B cell (primary cell): ENCODE measurements at regions of chr4 and their contacts with region 1.

Region 1: DNA sequence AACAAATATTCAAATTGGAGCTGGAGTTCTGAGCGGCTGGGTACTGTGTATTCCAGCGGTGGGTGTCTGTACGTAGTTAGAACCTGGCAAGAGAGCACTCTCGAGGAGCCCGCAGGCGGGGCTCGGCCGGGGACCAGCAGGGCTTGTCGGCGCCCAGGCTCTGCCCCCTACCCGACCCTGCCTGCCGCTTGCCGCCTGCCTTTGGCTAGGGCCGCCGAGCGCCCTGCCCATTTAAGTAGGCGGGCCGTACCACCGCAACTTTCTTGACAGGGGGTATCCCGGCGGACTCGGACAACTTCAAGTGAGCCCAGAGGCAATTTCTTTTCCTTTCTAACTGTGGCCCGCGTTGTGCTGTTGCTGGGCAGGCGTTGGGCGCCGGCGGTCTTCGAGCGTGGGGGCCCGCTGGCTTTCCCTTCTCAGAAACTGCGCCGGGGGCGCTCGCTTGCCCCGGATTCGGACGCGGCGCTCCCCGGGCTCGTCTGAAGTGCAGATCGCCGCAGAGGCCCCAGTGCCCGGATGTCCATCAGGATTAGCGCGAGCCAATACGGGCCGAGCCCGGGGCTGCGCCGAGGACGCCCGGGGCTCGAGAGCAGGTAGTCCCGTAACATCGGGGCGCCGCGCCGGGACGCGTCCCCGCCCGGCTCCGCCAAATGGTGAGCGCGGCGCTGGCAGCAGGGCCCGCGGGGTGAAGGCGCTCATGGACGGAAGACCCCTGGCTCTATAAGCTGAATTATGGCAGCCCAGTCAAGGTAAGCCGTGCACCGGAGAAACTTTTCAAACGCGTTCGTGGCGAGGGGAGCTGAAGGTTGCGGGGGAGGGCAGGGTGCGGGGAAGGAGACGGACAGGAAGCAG is 72.1 kb downstream of the AFF1 start:
- DNase-seq: peak; percentile 97
- ATAC-seq: peak; percentile 85
- H3K4me3 ChIP-seq: peak overlapping the region; percentile 67 to 100 (median 89)
- H3K4me3 Mint-ChIP-seq: peak overlapping the region; percentile 99
- H3K27ac ChIP-seq: peak overlapping the region; percentile 88 to 92
- H3K27ac Mint-ChIP-seq: peak overlapping the region; percentile 95
- H3K4me1 ChIP-seq: peaks cover 40 to 46% of the 10 kb centered on the region in 2 donors
- H3K4me1 Mint-ChIP-seq: peaks cover 54% of the 10 kb centered on the region
- H3K27me3 ChIP-seq: no peaks in the 10 kb centered on the region
- H3K27me3 Mint-ChIP-seq: no peaks in the 10 kb centered on the region
- CTCF ChIP-seq: peak; percentile 8

Region 2: GRCh38 chr4:85498068-85498733 is 1508.7 kb before region 1 on chr4:
- CTCF ChIA-PET with region 1: no interaction called
- POLR2A ChIA-PET with region 1: interaction called, 11 read pairs
- intact Hi-C with region 1: no loop called
- DNase-seq: peak; percentile 82
- ATAC-seq: peak; percentile 97
- H3K4me3 ChIP-seq: peak overlapping the region in 1 of 5 experiments; percentile 34
- H3K4me3 Mint-ChIP-seq: peak overlapping the region; percentile 66
- H3K27ac ChIP-seq: peak overlapping the region; percentile 67 to 91
- H3K27ac Mint-ChIP-seq: peak overlapping the region; percentile 89
- H3K4me1 ChIP-seq: peaks cover 36 to 45% of the 10 kb centered on the region in 2 donors
- H3K4me1 Mint-ChIP-seq: peaks cover 63% of the 10 kb centered on the region
- H3K27me3 ChIP-seq: no peaks in the 10 kb centered on the region
- H3K27me3 Mint-ChIP-seq: no peaks in the 10 kb centered on the region
- CTCF ChIP-seq: no peak

Region 3: DNA sequence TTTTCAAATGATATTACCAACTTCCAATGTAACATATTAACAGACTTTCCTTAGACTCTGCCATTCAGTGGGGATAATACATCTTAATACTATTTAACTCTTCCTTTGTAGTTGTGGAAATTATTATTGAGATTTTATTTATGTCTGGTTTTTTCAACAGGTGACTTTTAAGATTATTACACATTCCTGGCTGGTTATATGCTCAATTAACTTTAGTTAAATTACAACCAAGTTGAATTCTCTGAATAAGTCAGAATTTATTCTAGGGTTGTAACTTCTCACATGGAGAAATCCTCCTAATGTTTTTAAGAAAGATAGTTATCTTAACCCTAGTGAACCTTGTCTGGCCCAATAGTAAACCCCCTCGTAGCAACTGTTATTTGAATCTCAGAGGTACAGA is 265.1 kb before region 1 on chr4:
- CTCF ChIA-PET with region 1: no interaction called
- POLR2A ChIA-PET with region 1: no interaction called
- intact Hi-C with region 1: no loop called
- DNase-seq: no peak
- ATAC-seq: no peak
- H3K4me3 ChIP-seq: no peak overlapping the region
- H3K4me3 Mint-ChIP-seq: no peak overlapping the region
- H3K27ac ChIP-seq: no peak overlapping the region
- H3K27ac Mint-ChIP-seq: no peak overlapping the region
- H3K4me1 ChIP-seq: no peaks in the 10 kb centered on the region
- H3K4me1 Mint-ChIP-seq: no peaks in the 10 kb centered on the region
- H3K27me3 ChIP-seq: no peaks in the 10 kb centered on the region
- H3K27me3 Mint-ChIP-seq: no peaks in the 10 kb centered on the region
- CTCF ChIP-seq: no peak

Region 4: DNA sequence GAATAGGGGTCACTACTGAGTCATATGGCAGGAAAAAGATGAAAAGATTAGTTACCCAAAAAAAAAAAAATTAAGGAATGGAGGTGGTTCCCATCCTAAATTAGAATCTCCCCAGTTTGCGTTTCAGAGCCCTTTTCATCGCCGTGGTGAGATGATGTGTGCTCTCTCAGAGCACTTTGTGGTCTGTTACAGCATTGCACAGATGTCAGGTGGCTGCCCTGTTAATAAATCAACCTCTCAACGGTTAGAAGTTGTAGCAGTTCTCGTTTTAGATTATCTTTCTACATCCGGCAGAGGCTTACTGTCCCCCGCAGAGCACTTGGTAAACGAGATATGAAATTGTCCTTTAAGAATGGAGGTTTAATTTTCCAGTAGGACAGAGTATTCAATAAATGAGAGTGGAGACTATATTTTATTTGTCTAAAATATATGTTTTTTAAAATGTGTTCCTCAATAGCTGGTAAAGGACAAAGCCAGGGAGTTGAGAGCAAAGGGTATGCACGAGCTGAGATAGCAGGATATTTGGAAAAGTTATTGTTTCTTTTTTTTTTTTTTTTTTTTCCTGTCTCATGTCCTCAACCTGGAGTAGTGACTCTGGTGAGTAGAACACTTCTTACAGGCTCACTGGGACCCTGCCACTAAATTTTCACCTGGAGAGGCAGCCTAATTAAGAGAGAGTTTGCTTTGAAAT is 45.2 kb before region 1 on chr4:
- CTCF ChIA-PET with region 1: interaction called, 3 read pairs
- POLR2A ChIA-PET with region 1: interaction called, 4 read pairs
- intact Hi-C with region 1: loop called (anchors 2 kb)
- DNase-seq: peak; percentile 72
- ATAC-seq: peak; percentile 89
- H3K4me3 ChIP-seq: peak overlapping the region in 2 of 5 experiments; percentile 5 to 20
- H3K4me3 Mint-ChIP-seq: peak overlapping the region; percentile 52
- H3K27ac ChIP-seq: peak overlapping the region; percentile 54 to 73
- H3K27ac Mint-ChIP-seq: peak overlapping the region; percentile 22
- H3K4me1 ChIP-seq: peaks cover 59 to 65% of the 10 kb centered on the region in 2 donors
- H3K4me1 Mint-ChIP-seq: peaks cover 48% of the 10 kb centered on the region
- H3K27me3 ChIP-seq: no peaks in the 10 kb centered on the region
- H3K27me3 Mint-ChIP-seq: no peaks in the 10 kb centered on the region
- CTCF ChIP-seq: no peak

Region 5: DNA sequence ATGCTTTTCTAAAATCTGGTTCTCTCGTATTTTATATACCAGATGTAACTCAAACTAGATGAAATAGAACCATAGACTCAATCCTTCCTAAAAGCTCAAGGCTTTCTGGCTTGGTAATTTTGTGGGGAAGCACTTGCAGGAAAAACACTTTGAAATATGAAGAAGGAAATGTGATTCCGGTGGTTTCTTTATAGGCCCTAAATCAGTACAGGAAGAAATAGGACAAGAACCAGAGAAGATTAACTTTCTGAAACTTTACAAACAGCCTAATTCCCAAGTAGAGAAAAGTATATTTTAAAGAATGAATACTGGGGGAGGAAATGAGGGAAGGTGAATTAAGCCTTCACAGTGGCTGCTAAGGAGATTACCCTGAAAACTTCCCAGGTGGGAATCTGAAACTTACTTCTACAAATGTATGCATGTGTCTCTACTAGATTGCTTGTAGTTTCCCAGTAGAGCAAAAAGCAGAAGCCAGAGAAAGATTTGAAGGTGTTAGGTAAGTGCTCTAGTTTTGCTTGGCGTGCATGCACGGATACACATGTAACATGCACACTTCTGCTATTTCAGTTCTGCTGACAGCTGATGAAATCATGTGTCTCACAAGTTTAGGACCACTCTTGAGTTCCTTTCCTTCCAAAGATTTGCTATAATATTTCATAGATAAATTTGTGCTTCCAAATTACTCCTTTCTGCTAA is 20.0 kb after region 1 on chr4:
- CTCF ChIA-PET with region 1: interaction called, 5 read pairs
- POLR2A ChIA-PET with region 1: interaction called, 5 read pairs
- intact Hi-C with region 1: loop called (anchors 1 kb)
- DNase-seq: peak; percentile 82
- ATAC-seq: peak; percentile 96
- H3K4me3 ChIP-seq: no peak overlapping the region
- H3K4me3 Mint-ChIP-seq: peak overlapping the region; percentile 52
- H3K27ac ChIP-seq: peak overlapping the region; percentile 48 to 78
- H3K27ac Mint-ChIP-seq: peak overlapping the region; percentile 80
- H3K4me1 ChIP-seq: peaks cover 40 to 61% of the 10 kb centered on the region in 2 donors
- H3K4me1 Mint-ChIP-seq: peaks cover 52% of the 10 kb centered on the region
- H3K27me3 ChIP-seq: no peaks in the 10 kb centered on the region
- H3K27me3 Mint-ChIP-seq: no peaks in the 10 kb centered on the region
- CTCF ChIP-seq: no peak

Region 6: GRCh38 chr4:87093443-87094123 is 86.7 kb after region 1 on chr4:
- CTCF ChIA-PET with region 1: interaction called, 64 read pairs
- POLR2A ChIA-PET with region 1: no interaction called
- intact Hi-C with region 1: loop called (anchors 1 kb)
- DNase-seq: peak; percentile 75
- ATAC-seq: peak; percentile 84
- H3K4me3 ChIP-seq: no peak overlapping the region
- H3K4me3 Mint-ChIP-seq: no peak overlapping the region
- H3K27ac ChIP-seq: peak overlapping the region in 1 of 2 donors; percentile 32
- H3K27ac Mint-ChIP-seq: peak overlapping the region; percentile 77
- H3K4me1 ChIP-seq: peaks cover 10 to 14% of the 10 kb centered on the region in 2 donors
- H3K4me1 Mint-ChIP-seq: peaks cover 21% of the 10 kb centered on the region
- H3K27me3 ChIP-seq: no peaks in the 10 kb centered on the region
- H3K27me3 Mint-ChIP-seq: no peaks in the 10 kb centered on the region
- CTCF ChIP-seq: peak; percentile 80

Region 7: GRCh38 chr4:87422104-87423052 is 415.5 kb after region 1 on chr4 and contains the start of gene NUDT9:
- CTCF ChIA-PET with region 1: no interaction called
- POLR2A ChIA-PET with region 1: interaction called, 3 read pairs
- intact Hi-C with region 1: loop called (anchors 2 kb)
- DNase-seq: peak; percentile 93
- ATAC-seq: peak; percentile 85
- H3K4me3 ChIP-seq: peak within 1 kb of the TSS; percentile 86 to 97 (median 89)
- H3K4me3 Mint-ChIP-seq: peak within 1 kb of the TSS; percentile 100
- H3K27ac ChIP-seq: peak within 1 kb of the TSS; percentile 80 to 92
- H3K27ac Mint-ChIP-seq: peak within 1 kb of the TSS; percentile 100
- H3K4me1 ChIP-seq: peaks cover 16 to 26% of the 10 kb centered on the region in 2 donors
- H3K4me1 Mint-ChIP-seq: peaks cover 40% of the 10 kb centered on the region
- H3K27me3 ChIP-seq: no peaks in the 10 kb centered on the region
- H3K27me3 Mint-ChIP-seq: no peaks in the 10 kb centered on the region
- CTCF ChIP-seq: no peak
- total RNA-seq, gene NUDT9: 17.5 and 21.5 TPM in 2 replicates